Panc1 (cell line): ENCODE measurements at regions of chr17 and their contacts with region 1.

Region 1: DNA sequence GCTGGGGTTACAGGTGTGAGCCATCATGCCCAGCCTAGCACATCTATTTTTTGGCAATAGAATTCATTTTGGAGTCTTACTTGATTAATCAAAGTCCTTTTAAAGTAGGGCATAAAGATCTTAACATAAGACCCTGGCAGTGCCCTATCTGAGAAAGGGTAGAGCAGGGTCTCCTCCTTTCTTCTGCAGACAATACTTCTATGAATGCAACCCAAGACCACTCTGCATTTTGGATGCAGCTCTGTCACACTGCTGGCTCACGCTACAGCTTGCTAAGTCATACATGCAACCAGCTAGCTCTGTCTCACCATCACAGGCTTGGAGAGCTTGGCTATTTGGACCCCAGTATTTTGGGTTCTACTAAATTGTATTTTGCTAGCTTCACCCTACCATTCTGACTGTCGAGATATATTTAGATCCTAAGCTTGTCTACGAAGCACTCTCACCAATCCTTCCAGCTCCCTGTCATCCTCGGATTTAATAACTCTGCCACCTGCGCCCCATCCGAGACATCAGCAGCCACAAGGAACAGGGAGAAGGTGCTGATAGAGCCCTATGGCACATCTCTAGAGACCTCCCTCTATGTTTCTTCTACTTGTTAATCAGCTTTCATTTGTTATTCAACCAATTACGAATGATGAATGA is 45.1 kb downstream of the RBFOX3 start:
- DNase-seq: no peak
- ATAC-seq: no peak
- H3K4me3 ChIP-seq: no peak overlapping the region
- H3K27ac ChIP-seq: no peak overlapping the region
- H3K4me1 ChIP-seq: no peaks in the 10 kb centered on the region
- H3K27me3 ChIP-seq: peaks cover 14% of the 10 kb centered on the region
- CTCF ChIP-seq: no peak

Region 2: DNA sequence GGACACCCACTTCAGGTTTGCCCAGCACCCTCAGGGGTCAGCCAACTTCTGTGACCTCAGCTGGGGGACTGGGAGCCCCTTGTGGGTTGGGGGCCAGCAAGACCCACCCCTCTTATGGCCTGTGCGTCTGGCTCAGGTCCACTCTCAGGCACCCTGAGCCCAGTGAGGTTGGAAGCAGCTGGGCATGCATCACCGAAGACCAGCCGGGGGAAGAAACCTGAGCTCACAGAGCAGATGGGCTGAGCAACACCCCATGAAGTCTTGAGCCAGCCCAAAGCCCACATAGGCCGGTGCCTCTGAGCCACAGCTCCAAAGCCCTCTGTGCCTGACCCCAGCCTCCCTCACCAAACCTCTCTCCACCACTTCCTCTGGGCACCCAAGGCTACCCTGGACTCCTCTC is 121.5 kb before region 1 on chr17:
- CTCF ChIA-PET with region 1: no interaction called
- POLR2A ChIA-PET with region 1: no interaction called
- in situ Hi-C with region 1: no loop called
- intact Hi-C with region 1: no loop called
- DNase-seq: no peak
- ATAC-seq: no peak
- H3K4me3 ChIP-seq: no peak overlapping the region
- H3K27ac ChIP-seq: no peak overlapping the region
- H3K4me1 ChIP-seq: no peaks in the 10 kb centered on the region
- H3K27me3 ChIP-seq: no peaks in the 10 kb centered on the region
- CTCF ChIP-seq: no peak

Region 3: GRCh38 chr17:79589669-79590522 is 24.2 kb after region 1 on chr17:
- CTCF ChIA-PET with region 1: no interaction called
- POLR2A ChIA-PET with region 1: interaction called, 11 read pairs
- in situ Hi-C with region 1: no loop called
- intact Hi-C with region 1: no loop called
- DNase-seq: no peak
- ATAC-seq: no peak
- H3K4me3 ChIP-seq: no peak overlapping the region
- H3K27ac ChIP-seq: no peak overlapping the region
- H3K4me1 ChIP-seq: no peaks in the 10 kb centered on the region
- H3K27me3 ChIP-seq: peaks cover 20% of the 10 kb centered on the region
- CTCF ChIP-seq: no peak

Region 4: DNA sequence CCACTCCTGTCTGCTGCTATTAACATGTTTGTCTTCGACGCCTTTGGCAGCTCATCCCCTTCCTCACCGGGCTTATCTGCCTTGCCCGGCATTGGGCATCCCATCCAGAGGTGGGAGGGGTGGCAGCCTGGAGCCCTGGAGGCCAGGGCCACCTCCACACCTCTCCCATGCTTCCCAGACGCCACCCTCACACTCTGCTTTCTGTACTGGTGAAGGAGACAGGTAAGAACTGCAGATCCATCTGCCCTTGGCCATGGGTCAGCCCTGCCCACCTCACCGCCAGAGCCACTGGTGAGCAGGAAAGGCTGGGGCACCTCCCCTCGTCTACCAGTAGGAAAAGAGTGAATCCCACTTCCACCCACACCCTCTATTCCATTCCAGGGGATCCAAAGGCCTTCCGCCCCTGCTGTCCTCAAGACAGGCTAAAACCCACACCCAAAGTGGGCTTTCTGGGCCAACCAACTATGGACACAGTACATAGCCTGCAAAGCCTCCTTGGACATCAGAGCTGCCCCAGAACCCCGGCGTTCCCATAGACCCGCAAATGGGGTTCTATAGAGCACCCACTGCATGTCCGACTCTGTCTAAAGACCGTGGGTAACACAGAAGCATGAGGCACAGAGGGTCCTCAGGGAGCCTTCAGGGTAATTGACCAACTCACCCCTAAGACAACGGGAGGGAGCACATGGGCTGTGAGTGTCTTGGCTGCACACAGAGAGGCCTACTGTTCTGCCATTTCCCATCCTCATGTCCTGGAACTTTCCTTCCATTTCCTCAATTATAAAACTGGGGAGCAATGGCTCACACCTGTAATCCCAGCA is 68.5 kb after region 1 on chr17:
- CTCF ChIA-PET with region 1: no interaction called
- POLR2A ChIA-PET with region 1: interaction called, 13 read pairs
- in situ Hi-C with region 1: no loop called
- intact Hi-C with region 1: no loop called
- DNase-seq: no peak
- ATAC-seq: no peak
- H3K4me3 ChIP-seq: no peak overlapping the region
- H3K27ac ChIP-seq: no peak overlapping the region
- H3K4me1 ChIP-seq: peaks cover 11% of the 10 kb centered on the region
- H3K27me3 ChIP-seq: peaks cover 20% of the 10 kb centered on the region
- CTCF ChIP-seq: no peak